CD4-positive, alpha-beta T cell (primary cell): ENCODE measurements at regions of chr10 and their contacts with region 1.

Region 1: DNA sequence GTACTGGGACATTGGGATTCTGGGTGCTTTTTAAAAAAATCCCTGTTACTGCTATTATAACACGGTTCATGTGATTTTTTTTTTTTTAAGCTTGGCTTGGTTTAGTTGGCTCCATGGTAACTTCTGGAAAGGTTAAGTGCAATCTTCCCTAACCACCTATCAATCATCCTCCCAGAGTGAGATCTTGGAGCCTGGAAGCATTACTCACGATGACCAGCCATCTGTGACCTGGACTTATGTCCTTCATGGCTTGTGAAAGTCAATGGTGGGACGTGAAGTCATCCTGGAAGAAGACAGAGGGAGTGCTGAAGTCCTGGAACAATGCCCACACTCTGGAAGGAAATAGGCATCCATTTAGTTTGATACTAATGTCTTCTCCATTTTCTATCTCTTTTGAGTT is 135.5 kb upstream of the FRMD4A start:
- DNase-seq: no peak
- ATAC-seq: no peak
- H3K4me3 ChIP-seq: no peak overlapping the region
- H3K4me3 Mint-ChIP-seq: no peak overlapping the region
- H3K27ac ChIP-seq: no peak overlapping the region
- H3K27ac Mint-ChIP-seq: no peak overlapping the region
- H3K4me1 ChIP-seq: no peaks in the 10 kb centered on the region
- H3K4me1 Mint-ChIP-seq: no peaks in the 10 kb centered on the region
- H3K27me3 ChIP-seq: peaks cover 0 to 9% of the 10 kb centered on the region in 2 experiments
- H3K27me3 Mint-ChIP-seq: peaks cover 18% of the 10 kb centered on the region
- CTCF ChIP-seq: no peak

Region 2: GRCh38 chr10:14450041-14450491 is 16.2 kb before region 1 on chr10:
- CTCF ChIA-PET with region 1: no interaction called
- POLR2A ChIA-PET with region 1: no interaction called
- intact Hi-C with region 1: no loop called
- DNase-seq: no peak
- ATAC-seq: no peak
- H3K4me3 ChIP-seq: no peak overlapping the region
- H3K4me3 Mint-ChIP-seq: no peak overlapping the region
- H3K27ac ChIP-seq: no peak overlapping the region
- H3K27ac Mint-ChIP-seq: no peak overlapping the region
- H3K4me1 ChIP-seq: no peaks in the 10 kb centered on the region
- H3K4me1 Mint-ChIP-seq: no peaks in the 10 kb centered on the region
- H3K27me3 ChIP-seq: no peaks in the 10 kb centered on the region
- H3K27me3 Mint-ChIP-seq: no peaks in the 10 kb centered on the region
- CTCF ChIP-seq: no peak

Region 3: DNA sequence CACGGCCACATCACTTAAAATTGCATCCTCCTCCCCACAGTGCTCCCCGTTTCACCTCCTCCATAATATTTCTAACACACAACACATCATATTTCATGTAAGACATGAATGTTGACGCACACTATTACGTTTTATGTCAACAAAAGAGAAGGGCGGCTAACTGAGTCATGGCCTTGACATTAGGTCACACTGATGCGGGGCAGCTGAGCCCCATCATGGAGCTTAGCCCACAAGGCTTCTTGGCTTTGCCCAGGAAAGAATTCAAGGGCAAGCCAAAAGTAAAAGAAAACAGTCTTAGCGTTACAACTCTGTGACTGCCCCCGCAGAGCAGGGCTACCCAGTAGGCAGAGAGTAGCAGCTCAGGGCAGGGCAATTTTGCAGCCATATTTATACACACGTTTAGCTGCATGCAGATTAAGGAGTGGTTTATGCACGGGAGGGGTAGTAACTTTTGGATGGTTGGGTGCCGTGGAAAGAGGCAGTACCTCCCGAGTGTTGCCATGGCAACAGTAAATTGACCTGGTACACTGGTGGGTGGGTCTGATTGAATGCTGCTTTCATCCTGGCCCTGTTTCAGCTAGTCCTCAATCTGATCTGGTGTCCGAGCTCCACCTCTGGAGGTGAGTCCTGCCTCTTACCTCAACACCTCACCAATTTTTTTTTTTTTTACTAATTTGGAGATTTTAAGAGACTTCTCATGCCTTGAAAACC is 20.7 kb after region 1 on chr10:
- CTCF ChIA-PET with region 1: no interaction called
- POLR2A ChIA-PET with region 1: no interaction called
- intact Hi-C with region 1: loop called in 1 of 2 experiments (anchors 2 kb)
- DNase-seq: no peak
- ATAC-seq: no peak
- H3K4me3 ChIP-seq: no peak overlapping the region
- H3K4me3 Mint-ChIP-seq: no peak overlapping the region
- H3K27ac ChIP-seq: no peak overlapping the region
- H3K27ac Mint-ChIP-seq: no peak overlapping the region
- H3K4me1 ChIP-seq: no peaks in the 10 kb centered on the region
- H3K4me1 Mint-ChIP-seq: no peaks in the 10 kb centered on the region
- H3K27me3 ChIP-seq: peaks cover 7 to 13% of the 10 kb centered on the region in 2 experiments
- H3K27me3 Mint-ChIP-seq: peaks cover 47% of the 10 kb centered on the region
- CTCF ChIP-seq: no peak